ENCODE measurements at regions of chr2 and their contacts with region 1.

Region 1: DNA sequence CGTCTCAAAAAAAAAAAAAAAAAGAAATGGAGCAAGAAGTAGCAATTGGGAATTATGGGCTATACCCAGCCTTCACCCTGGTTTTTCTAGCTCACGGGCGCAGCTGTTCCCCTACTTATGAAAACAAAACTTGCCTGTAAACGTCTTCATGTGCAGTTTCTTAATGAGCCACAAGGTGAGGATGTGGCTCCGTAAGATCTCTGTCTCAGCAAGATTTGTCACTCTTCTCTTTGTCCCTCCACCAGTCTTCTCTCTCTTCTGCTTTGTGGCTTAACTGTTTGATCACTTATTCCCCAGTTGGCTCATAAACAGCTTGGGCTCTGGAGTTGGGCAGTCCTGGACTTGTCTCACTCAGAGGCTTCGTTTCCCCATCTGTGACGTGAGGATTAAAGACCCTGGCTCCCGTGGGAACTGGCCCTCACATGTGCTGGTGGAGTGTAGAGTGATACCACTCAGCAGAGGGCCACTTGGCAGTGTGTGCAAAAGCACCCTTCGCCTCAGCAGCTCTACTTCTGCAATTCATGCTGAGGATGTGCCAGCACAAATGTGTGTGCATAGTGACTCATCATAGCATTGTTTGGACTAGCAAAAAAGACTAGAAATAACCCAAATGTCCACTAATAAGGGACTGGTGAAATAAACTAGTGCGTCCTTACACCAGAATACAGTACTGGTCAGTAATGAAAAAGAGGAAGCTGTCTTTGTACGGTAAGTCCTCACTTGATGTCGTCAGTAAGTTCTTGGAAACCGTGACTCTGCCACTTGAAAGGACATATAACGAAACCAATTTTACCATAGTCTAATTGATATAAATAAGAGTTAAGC is 8.7 kb downstream of the CEP68 start:
- DNase-seq: peak; percentile 72
- ATAC-seq: peak; percentile 76
- H3K4me3 Mint-ChIP-seq: no peak overlapping the region
- H3K27ac Mint-ChIP-seq: peak overlapping the region; percentile 69
- H3K4me1 Mint-ChIP-seq: peaks cover 37% of the 10 kb centered on the region
- H3K27me3 Mint-ChIP-seq: no peaks in the 10 kb centered on the region

Region 2: DNA sequence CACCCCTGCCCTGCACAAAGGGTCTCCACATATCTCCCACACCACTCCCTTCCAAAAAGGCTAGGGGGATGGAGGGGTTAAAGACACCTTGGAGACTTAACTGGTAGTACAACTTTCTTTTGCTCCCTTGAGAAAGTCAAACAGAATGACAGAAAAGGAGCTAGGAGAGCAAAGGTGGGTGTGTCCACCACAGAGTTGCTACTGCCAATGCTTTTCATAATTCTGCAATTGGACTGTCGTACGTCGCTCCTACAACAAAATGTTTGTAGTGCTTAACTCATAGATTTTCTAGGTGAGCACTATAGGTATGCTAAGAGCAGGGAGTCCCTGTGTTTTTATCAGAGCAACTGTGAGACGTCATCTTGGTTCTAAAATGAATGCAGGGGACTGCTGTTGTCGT is 18.2 kb after region 1 on chr2:
- CTCF ChIA-PET with region 1: interaction called, 26 read pairs
- POLR2A ChIA-PET with region 1: interaction called, 4 read pairs
- DNase-seq: no peak
- ATAC-seq: no peak
- H3K4me3 Mint-ChIP-seq: no peak overlapping the region
- H3K27ac Mint-ChIP-seq: no peak overlapping the region
- H3K4me1 Mint-ChIP-seq: peaks cover 11% of the 10 kb centered on the region
- H3K27me3 Mint-ChIP-seq: no peaks in the 10 kb centered on the region

Region 3: GRCh38 chr2:65142515-65142914 is 77.6 kb after region 1 on chr2:
- CTCF ChIA-PET with region 1: interaction called, 13 read pairs
- POLR2A ChIA-PET with region 1: interaction called, 3 read pairs
- DNase-seq: no peak
- ATAC-seq: peak; percentile 49
- H3K4me3 Mint-ChIP-seq: no peak overlapping the region
- H3K27ac Mint-ChIP-seq: no peak overlapping the region
- H3K4me1 Mint-ChIP-seq: no peaks in the 10 kb centered on the region
- H3K27me3 Mint-ChIP-seq: peaks cover 20% of the 10 kb centered on the region

Region 4: DNA sequence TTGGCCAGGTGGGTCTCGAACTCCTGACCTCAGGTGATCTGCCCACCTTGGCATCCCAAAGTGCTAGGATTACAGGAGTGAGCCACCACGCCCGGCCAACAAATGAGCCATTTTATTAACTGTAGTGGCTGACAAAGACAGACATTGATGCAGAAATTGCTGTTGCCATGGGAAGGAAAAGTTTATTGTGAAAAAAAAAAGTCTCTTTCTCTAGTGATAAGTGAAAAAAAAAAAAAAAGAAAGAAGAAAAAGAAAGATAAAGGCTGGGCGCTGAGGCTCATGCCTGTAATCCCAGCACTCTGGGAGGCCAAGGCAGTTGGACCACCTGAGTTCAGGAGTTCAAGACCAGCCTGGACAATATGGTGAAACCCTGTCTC is 104.8 kb after region 1 on chr2:
- CTCF ChIA-PET with region 1: interaction called, 82 read pairs
- POLR2A ChIA-PET with region 1: no interaction called
- DNase-seq: no peak
- ATAC-seq: no peak
- H3K4me3 Mint-ChIP-seq: no peak overlapping the region
- H3K27ac Mint-ChIP-seq: no peak overlapping the region
- H3K4me1 Mint-ChIP-seq: no peaks in the 10 kb centered on the region
- H3K27me3 Mint-ChIP-seq: no peaks in the 10 kb centered on the region

Region 5: DNA sequence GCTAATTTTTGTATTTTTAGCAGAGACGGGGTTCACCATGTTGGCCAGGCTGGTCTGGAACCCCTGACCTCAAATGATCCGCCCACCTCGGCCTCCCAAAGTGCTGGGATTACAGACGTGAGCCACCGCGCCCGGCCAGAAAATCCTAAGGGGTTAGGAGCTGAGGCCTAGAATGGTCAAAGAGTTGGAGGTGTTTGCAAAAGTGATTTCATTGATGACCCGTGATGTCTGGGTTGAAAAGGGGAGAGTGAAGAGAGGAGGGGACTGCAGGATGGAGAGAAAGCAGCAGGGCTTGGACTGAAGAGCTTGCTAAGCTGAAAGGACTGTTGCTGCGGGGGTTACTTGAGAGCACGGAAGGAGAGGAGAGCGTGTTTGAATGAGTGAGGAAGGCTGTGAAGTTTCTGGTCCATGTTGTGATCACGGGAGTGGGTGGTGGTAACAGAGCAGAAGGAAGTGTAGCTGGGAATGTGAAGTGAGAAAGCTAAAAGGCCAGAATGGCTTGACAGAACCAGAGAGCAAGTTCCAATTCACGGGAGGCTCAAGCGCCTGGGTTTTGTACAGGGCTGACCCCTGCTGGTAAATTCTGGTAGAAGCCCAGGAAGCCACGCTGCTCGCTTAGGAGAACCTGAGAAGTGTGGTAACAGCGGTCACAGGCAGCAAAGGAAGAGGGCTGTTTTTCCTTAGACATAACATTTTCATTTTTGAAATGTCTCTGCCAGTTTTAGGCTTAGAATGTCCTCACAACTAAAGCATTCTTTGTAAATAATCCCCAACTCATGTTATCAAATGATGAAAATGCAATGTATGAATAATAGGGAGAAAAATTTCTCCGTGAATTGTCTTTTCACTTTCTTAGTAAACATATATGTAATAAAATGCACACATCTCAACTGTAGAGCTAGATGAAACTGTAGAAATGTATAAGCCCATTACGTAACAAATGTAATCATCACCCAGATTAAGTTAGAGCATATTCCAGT is 122.2 kb after region 1 on chr2:
- CTCF ChIA-PET with region 1: interaction called, 56 read pairs
- POLR2A ChIA-PET with region 1: no interaction called
- DNase-seq: peak; percentile 78
- ATAC-seq: peak; percentile 98
- H3K4me3 Mint-ChIP-seq: no peak overlapping the region
- H3K27ac Mint-ChIP-seq: no peak overlapping the region
- H3K4me1 Mint-ChIP-seq: peaks cover 11% of the 10 kb centered on the region
- H3K27me3 Mint-ChIP-seq: peaks cover 3% of the 10 kb centered on the region

Measured in activated CD8-positive, alpha-beta T cell treated with anti-CD3 and anti-CD28 coated beads, Interleukin-2, amount 10 ng/mL, durations not matched to agents 7 days and 5 days (primary cell).